Calu3 (cell line): ENCODE measurements at regions of chr9 and their contacts with region 1.

Region 1: DNA sequence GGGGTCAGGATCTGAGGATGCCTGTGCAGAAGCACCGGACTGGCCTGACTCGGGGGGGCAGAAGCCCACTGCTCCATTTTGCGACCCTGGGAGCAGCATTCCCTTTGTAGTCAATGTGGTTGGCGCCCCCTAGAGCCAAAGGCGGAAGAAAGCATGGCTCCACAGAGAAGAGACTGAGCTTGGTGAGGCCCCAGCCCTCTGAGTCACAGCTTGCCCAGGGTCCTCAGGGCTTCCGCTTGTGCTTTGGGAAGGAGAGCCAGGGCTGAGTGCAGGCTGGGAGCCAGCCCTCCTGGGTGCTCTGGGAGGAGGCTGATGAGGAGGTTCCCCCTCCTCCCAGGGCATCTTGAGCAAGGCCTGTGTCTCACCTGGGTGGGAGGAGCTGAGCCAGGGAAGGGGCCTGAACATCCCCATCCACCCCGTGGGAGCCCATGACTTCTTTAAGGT is 5.5 kb upstream of the AQP3 start:
- DNase-seq: peak; percentile 77
- H3K4me3 Mint-ChIP-seq: no peak overlapping the region
- H3K27ac Mint-ChIP-seq: peak overlapping the region; percentile 30
- H3K4me1 Mint-ChIP-seq: peaks cover 29% of the 10 kb centered on the region
- H3K27me3 Mint-ChIP-seq: no peaks in the 10 kb centered on the region
- CTCF ChIP-seq: peak; percentile 69

Region 2: GRCh38 chr9:33374634-33375213 is 78.1 kb before region 1 on chr9:
- CTCF ChIA-PET with region 1: interaction called, 10 read pairs
- intact Hi-C with region 1: no loop called
- DNase-seq: peak; percentile 75
- H3K4me3 Mint-ChIP-seq: no peak overlapping the region
- H3K27ac Mint-ChIP-seq: no peak overlapping the region
- H3K4me1 Mint-ChIP-seq: no peaks in the 10 kb centered on the region
- H3K27me3 Mint-ChIP-seq: no peaks in the 10 kb centered on the region
- CTCF ChIP-seq: peak; percentile 64

Region 3: DNA sequence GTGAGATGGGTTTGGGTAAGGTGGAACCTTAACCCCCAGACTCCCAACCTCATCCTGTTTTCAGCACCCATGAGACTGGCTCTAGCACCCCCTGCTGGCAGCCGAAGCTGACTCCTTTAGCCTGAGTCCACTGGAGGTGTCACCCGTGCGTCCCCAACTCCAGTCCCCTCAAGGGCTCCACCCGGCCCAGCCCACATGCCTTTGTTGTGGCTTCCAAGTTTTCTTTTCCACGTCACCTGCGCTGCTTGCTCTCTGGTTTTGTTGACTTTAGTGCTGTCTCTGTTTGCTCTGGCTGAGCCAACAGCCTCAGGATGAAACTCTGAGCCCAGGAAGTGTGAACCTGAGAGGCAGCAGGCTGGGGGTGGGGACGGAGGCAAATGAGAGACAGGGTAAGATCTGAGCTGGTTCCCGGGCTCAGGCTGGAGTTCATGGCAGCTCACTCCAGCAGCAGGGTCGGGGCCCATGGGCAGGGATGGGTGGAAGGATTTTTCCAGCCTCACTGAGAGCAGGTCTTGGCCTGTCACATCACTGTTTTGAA is 37.3 kb before region 1 on chr9:
- CTCF ChIA-PET with region 1: interaction called, 13 read pairs
- intact Hi-C with region 1: loop called (anchors 5 kb)
- DNase-seq: peak; percentile 88
- H3K4me3 Mint-ChIP-seq: peak overlapping the region; percentile 41
- H3K27ac Mint-ChIP-seq: peak overlapping the region; percentile 62
- H3K4me1 Mint-ChIP-seq: peaks cover 47% of the 10 kb centered on the region
- H3K27me3 Mint-ChIP-seq: peaks cover 13% of the 10 kb centered on the region
- CTCF ChIP-seq: peak; percentile 66